Cardiac septum (tissue), 1 donor: ENCODE measurements at regions of chr5 and their contacts with region 1.

Region 1: DNA sequence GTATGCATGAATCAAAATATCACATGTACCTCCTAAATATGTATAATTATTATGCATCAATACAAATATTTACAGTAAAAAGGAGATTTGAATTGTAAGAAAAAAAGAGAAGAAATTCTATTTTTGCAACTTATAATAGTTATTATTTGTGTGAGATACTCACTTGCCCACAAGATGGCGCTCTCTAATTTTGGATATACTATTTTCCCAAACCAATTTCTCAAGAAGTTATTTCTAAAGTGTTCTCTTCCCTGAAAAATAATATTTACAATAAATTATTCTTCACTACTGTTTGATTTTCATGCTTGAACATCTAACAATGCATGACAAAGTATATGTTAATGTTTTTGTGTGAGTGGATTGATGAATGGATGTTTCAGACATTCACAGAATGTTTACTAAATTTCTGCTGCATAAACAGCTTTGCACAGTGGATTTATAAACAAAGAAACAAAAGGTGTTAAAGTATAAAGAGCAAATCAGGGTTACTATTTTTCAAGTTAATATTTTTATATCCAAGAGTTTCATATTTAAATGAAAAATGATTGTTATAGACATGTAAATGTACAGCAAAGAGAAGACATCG is 503.4 kb downstream of the PDE4D start:
- DNase-seq: no peak

Region 2: GRCh38 chr5:59335544-59335943 is 54.6 kb before region 1 on chr5:
- intact Hi-C with region 1: no loop called
- DNase-seq: no peak

Region 3: GRCh38 chr5:59412428-59412827 is 22.3 kb after region 1 on chr5:
- intact Hi-C with region 1: no loop called
- DNase-seq: no peak

Region 4: GRCh38 chr5:59496524-59497134 is 106.5 kb after region 1 on chr5:
- intact Hi-C with region 1: loop called (anchors 5 kb)
- DNase-seq: no peak